ENCODE measurements at regions of chr7 and their contacts with region 1.

Region 1: DNA sequence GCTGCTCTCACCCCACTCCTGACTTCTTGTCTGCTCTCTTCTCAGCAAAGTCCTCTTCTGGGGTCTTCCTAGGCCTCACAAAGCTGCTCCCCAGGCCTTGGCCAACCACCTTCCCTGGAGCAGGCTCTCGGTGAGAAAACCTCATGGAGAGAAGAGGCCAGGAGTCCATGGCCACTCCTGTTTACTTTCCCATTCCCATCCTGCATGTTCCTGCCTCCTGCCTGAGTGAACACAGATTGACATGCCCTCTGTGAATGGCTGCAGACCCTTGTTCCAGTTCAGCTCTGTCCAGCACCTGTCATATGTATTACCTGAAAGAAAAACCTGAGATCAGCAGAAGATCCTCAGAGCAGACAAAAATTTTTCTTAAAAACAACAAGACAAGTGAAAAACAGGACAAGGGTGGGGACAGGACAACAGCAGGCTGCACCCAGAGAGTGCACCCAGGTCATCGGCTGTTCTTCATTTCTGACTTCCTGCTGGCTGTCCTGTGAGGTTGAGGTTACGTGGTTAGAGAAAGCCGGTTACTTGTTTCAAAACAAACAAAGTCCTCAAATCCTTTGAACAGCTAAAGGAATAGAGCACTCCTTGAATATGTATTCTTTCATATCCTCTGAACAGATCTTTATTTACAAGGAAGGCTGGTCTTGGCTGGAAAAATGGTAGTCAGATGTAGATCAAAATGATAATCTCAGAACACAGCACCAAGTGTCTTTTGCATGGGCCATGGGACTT is 34.0 kb upstream of the DLD start:
- DNase-seq: peak; percentile 49 to 70 (median 58)
- H3K4me3 ChIP-seq: peak overlapping the region; percentile 17 to 26
- H3K4me3 Mint-ChIP-seq: peak overlapping the region; percentile 18 to 82 (median 70)
- H3K27ac ChIP-seq: peak overlapping the region; percentile 48
- H3K27ac Mint-ChIP-seq: peak overlapping the region; percentile 84 to 94 (median 91)
- H3K4me1 ChIP-seq: peaks cover 71% of the 10 kb centered on the region
- H3K4me1 Mint-ChIP-seq: peaks cover 47 to 82% (median 70%) of the 10 kb centered on the region in 4 donors
- H3K27me3 ChIP-seq: no peaks in the 10 kb centered on the region
- H3K27me3 Mint-ChIP-seq: no peaks in the 10 kb centered on the region

Region 2: GRCh38 chr7:107768272-107768671 is 88.7 kb before region 1 on chr7:
- CTCF ChIA-PET with region 1: interaction called, 3 read pairs
- POLR2A ChIA-PET with region 1: interaction called, 19 read pairs
- intact Hi-C with region 1: no loop called
- DNase-seq: no peak
- H3K4me3 ChIP-seq: no peak overlapping the region
- H3K4me3 Mint-ChIP-seq: no peak overlapping the region
- H3K27ac ChIP-seq: no peak overlapping the region
- H3K27ac Mint-ChIP-seq: no peak overlapping the region
- H3K4me1 ChIP-seq: no peaks in the 10 kb centered on the region
- H3K4me1 Mint-ChIP-seq: peaks cover 10 to 28% (median 23%) of the 10 kb centered on the region in 4 donors
- H3K27me3 ChIP-seq: no peaks in the 10 kb centered on the region
- H3K27me3 Mint-ChIP-seq: no peaks in the 10 kb centered on the region

Region 3: DNA sequence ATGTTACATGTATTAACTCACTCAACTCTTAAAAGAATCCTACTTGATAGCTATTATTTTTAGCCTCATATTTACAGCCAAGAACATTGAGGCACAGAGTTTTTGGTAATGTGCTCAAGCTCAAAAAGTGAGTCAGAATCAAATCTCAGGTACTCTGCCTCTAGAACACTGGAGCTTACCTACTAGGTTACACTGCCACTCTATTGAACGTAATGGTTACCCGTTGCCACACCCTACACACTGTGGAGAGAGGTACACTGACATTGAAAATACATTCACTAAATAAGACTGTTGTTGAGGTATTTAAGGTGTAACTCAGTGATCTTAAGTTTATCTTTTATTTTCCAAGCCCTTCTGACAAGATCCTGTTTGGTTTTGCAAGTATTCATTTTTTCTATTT is 71.8 kb before region 1 on chr7:
- CTCF ChIA-PET with region 1: interaction called, 4 read pairs
- POLR2A ChIA-PET with region 1: interaction called, 11 read pairs
- intact Hi-C with region 1: no loop called
- DNase-seq: peak in 1 of 5 donors; percentile 9
- H3K4me3 ChIP-seq: no peak overlapping the region
- H3K4me3 Mint-ChIP-seq: peak overlapping the region in 6 of 8 donors; percentile 6 to 78 (median 68)
- H3K27ac ChIP-seq: no peak overlapping the region
- H3K27ac Mint-ChIP-seq: peak overlapping the region in 4 of 7 donors; percentile 4 to 76 (median 54)
- H3K4me1 ChIP-seq: peaks cover 24% of the 10 kb centered on the region
- H3K4me1 Mint-ChIP-seq: peaks cover 21 to 44% (median 33%) of the 10 kb centered on the region in 4 donors
- H3K27me3 ChIP-seq: no peaks in the 10 kb centered on the region
- H3K27me3 Mint-ChIP-seq: no peaks in the 10 kb centered on the region

Region 4: DNA sequence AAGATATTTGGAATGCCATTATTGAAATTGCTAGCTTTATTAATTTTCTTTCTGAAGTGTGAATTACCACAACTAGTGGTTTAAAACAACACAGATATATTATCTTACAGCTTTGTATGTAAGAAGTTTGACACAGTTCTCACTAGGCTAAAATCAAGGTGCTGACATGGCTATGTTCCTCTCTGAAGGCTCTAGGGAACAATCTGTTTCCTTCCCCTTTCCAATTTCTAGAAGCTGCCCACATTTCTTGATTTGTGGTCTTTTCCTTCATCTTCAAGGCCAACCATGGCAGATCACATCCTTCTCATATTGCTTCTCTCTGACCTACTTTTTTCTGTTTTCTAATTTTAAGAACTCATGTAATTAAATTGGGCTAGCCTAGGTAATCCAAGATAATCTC is 10.6 kb before region 1 on chr7:
- CTCF ChIA-PET with region 1: interaction called, 4 read pairs
- POLR2A ChIA-PET with region 1: interaction called, 10 read pairs
- intact Hi-C with region 1: no loop called
- DNase-seq: no peak
- H3K4me3 ChIP-seq: no peak overlapping the region
- H3K4me3 Mint-ChIP-seq: no peak overlapping the region
- H3K27ac ChIP-seq: no peak overlapping the region
- H3K27ac Mint-ChIP-seq: peak overlapping the region in 1 of 7 donors; percentile 29
- H3K4me1 ChIP-seq: no peaks in the 10 kb centered on the region
- H3K4me1 Mint-ChIP-seq: peaks cover 0 to 13% (median 2%) of the 10 kb centered on the region in 4 donors
- H3K27me3 ChIP-seq: no peaks in the 10 kb centered on the region
- H3K27me3 Mint-ChIP-seq: no peaks in the 10 kb centered on the region

Measured in CD4-positive, alpha-beta memory T cell (primary cell).